Heart left ventricle (tissue), 16 donors: ENCODE measurements at regions of chr7 and their contacts with region 1.

Region 1: DNA sequence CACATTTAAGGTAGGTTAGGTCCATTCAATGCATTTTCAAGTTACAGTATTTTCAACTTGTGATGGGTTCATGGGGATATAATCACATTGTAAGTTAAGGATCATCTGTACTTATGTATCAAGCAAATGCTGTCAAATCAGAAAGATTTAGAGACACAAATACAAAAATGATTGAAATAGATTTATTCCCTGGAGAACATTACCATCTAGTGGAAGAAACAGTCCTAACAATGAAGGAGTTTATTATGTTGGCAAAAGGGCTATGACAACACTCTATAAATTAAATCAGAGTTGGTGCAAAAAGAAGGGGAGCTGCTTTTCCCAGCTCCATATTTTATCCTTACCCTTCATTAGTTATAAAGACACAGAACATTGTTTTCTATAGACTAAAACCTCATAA is 69.0 kb downstream of the PRSS58 start:
- DNase-seq: no peak
- ATAC-seq: no peak
- H3K4me3 ChIP-seq: no peak overlapping the region
- H3K27ac ChIP-seq: no peak overlapping the region
- H3K4me1 ChIP-seq: peaks cover 0 to 10% (median 0%) of the 10 kb centered on the region in 12 donors
- H3K27me3 ChIP-seq: peaks cover 0 to 6% (median 0%) of the 10 kb centered on the region in 9 donors
- CTCF ChIP-seq: peak in 8 of 12 donors; percentile 12 to 47 (median 34)
- POLR2A ChIP-seq: no peak

Region 2: GRCh38 chr7:141975806-141976523 is 212.9 kb before region 1 on chr7:
- intact Hi-C with region 1: loop called in 9 of 10 experiments (anchors 2 to 5 kb)
- DNase-seq: peak; percentile 42 to 86 (median 66)
- ATAC-seq: peak; percentile 47 to 74 (median 64)
- H3K4me3 ChIP-seq: peak overlapping the region in 7 of 12 donors; percentile 5 to 50 (median 24)
- H3K27ac ChIP-seq: no peak overlapping the region
- H3K4me1 ChIP-seq: peaks cover 0 to 5% (median 0%) of the 10 kb centered on the region in 12 donors
- H3K27me3 ChIP-seq: peaks cover 0 to 5% (median 0%) of the 10 kb centered on the region in 9 donors
- CTCF ChIP-seq: peak; percentile 54 to 80 (median 68)
- POLR2A ChIP-seq: no peak